Caco-2 (cell line): ENCODE measurements at regions of chr6 and their contacts with region 1.

Region 1: DNA sequence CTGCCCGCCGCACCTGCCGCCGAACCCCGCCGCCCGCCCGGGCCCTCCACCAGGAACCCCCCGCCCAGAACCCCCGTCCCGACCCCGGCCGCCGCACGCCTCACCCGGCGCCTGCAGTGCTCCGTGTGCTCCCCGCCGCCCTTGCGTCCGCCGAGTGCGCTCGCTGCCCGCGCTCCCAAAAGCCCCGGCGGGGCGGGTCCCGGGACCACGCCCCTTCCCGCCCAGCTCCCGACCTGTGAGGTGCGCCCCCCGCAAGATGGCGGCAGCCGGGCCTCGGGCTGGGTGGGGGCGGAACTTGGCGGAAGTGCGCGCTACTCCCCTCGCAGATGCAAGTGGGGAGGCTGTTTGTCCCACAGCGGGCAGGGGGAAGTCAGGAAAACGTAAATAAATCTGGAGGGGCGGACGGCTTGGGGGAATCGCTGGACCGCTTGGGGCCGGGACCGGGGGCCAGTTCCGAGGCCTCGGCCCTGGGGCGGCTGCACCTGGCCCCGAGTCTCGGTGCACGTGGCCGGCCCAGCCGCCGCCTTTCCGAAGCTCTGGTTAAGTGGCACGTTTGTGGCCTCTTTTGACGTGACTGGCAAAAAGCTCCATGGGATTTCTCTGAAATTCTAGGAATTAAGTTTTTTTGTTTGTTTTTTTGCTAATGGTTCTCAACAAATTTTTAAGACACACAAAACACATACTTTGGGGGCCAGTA is at the start of gene EZR:
- DNase-seq: peak; percentile 89 to 90
- H3K4me3 ChIP-seq: peak within 1 kb of the TSS; percentile 71
- H3K4me3 Mint-ChIP-seq: peak within 1 kb of the TSS; percentile 89
- H3K27ac Mint-ChIP-seq: peak within 1 kb of the TSS; percentile 95
- H3K4me1 ChIP-seq: peaks cover 29% of the 10 kb centered on the region
- H3K4me1 Mint-ChIP-seq: peaks cover 18% of the 10 kb centered on the region
- H3K27me3 ChIP-seq: no peaks in the 10 kb centered on the region
- H3K27me3 Mint-ChIP-seq: no peaks in the 10 kb centered on the region
- CTCF ChIP-seq: peak in 1 of 2 experiments; percentile 13
- total RNA-seq, gene EZR: 282 and 290 TPM in 2 replicates

Region 2: GRCh38 chr6:158704181-158704822 is 115.1 kb before region 1 on chr6:
- CTCF ChIA-PET with region 1: no interaction called
- POLR2A ChIA-PET with region 1: no interaction called
- intact Hi-C with region 1: loop called (anchors 1 kb)
- DNase-seq: peak; percentile 80 to 89
- H3K4me3 ChIP-seq: peak overlapping the region; percentile 47
- H3K4me3 Mint-ChIP-seq: peak overlapping the region; percentile 84
- H3K27ac Mint-ChIP-seq: peak overlapping the region; percentile 92
- H3K4me1 ChIP-seq: peaks cover 43% of the 10 kb centered on the region
- H3K4me1 Mint-ChIP-seq: peaks cover 21% of the 10 kb centered on the region
- H3K27me3 ChIP-seq: no peaks in the 10 kb centered on the region
- H3K27me3 Mint-ChIP-seq: no peaks in the 10 kb centered on the region
- CTCF ChIP-seq: peak; percentile 91 to 96

Region 3: DNA sequence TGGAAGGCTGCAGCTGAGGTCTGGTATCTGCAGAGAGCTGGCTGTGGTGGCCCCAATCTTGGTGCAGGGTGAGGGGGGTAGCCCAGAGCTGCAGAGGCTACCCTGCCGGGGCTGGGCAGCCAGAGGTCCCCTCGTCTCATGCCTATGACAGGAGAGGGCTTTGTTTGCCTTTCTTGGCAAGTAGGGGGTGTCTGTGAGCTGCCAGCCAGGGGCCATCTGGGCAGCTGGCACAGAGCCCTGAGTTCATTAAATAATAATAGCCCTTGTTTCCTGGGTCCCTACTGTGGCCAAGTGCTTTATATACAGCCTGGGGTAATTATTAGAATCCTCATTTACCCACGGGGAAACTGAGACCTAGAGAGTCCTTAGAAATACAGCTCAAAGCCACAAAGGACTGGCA is 66.7 kb before region 1 on chr6:
- CTCF ChIA-PET with region 1: no interaction called
- POLR2A ChIA-PET with region 1: no interaction called
- intact Hi-C with region 1: no loop called
- DNase-seq: no peak
- H3K4me3 ChIP-seq: no peak overlapping the region
- H3K4me3 Mint-ChIP-seq: no peak overlapping the region
- H3K27ac Mint-ChIP-seq: no peak overlapping the region
- H3K4me1 ChIP-seq: no peaks in the 10 kb centered on the region
- H3K4me1 Mint-ChIP-seq: peaks cover 3% of the 10 kb centered on the region
- H3K27me3 ChIP-seq: no peaks in the 10 kb centered on the region
- H3K27me3 Mint-ChIP-seq: no peaks in the 10 kb centered on the region
- CTCF ChIP-seq: no peak

Region 4: DNA sequence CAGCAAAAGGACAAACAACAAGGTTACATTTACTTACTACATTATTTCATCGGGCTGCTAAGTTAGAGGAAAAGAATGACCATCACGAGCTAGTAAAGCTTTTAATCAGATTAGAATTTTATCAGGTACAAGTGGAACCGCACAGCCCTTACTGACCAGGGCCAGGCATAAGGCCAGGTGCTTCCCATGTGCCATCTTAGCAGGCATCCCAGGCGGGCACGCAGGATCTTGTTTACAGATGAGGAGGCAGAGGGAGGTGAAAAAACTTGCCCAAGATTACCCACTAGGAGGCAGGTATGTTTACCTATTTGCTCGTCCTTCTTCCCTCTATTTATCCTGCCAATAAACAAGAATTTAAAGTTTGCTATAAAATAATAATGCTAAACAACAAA is 10.9 kb before region 1 on chr6:
- CTCF ChIA-PET with region 1: no interaction called
- POLR2A ChIA-PET with region 1: interaction called, 5 read pairs
- intact Hi-C with region 1: loop called (anchors 1 kb)
- DNase-seq: no peak
- H3K4me3 ChIP-seq: no peak overlapping the region
- H3K4me3 Mint-ChIP-seq: no peak overlapping the region
- H3K27ac Mint-ChIP-seq: no peak overlapping the region
- H3K4me1 ChIP-seq: peaks cover 84% of the 10 kb centered on the region
- H3K4me1 Mint-ChIP-seq: peaks cover 64% of the 10 kb centered on the region
- H3K27me3 ChIP-seq: no peaks in the 10 kb centered on the region
- H3K27me3 Mint-ChIP-seq: no peaks in the 10 kb centered on the region
- CTCF ChIP-seq: no peak

Region 5: GRCh38 chr6:158853072-158853871 is 33.9 kb after region 1 on chr6:
- CTCF ChIA-PET with region 1: interaction called, 3 read pairs
- POLR2A ChIA-PET with region 1: interaction called, 21 read pairs
- intact Hi-C with region 1: loop called (anchors 1 kb)
- DNase-seq: peak; percentile 95 to 98
- H3K4me3 ChIP-seq: peak overlapping the region; percentile 21
- H3K4me3 Mint-ChIP-seq: no peak overlapping the region
- H3K27ac Mint-ChIP-seq: no peak overlapping the region
- H3K4me1 ChIP-seq: peaks cover 64% of the 10 kb centered on the region
- H3K4me1 Mint-ChIP-seq: peaks cover 27% of the 10 kb centered on the region
- H3K27me3 ChIP-seq: no peaks in the 10 kb centered on the region
- H3K27me3 Mint-ChIP-seq: no peaks in the 10 kb centered on the region
- CTCF ChIP-seq: no peak

Region 6: DNA sequence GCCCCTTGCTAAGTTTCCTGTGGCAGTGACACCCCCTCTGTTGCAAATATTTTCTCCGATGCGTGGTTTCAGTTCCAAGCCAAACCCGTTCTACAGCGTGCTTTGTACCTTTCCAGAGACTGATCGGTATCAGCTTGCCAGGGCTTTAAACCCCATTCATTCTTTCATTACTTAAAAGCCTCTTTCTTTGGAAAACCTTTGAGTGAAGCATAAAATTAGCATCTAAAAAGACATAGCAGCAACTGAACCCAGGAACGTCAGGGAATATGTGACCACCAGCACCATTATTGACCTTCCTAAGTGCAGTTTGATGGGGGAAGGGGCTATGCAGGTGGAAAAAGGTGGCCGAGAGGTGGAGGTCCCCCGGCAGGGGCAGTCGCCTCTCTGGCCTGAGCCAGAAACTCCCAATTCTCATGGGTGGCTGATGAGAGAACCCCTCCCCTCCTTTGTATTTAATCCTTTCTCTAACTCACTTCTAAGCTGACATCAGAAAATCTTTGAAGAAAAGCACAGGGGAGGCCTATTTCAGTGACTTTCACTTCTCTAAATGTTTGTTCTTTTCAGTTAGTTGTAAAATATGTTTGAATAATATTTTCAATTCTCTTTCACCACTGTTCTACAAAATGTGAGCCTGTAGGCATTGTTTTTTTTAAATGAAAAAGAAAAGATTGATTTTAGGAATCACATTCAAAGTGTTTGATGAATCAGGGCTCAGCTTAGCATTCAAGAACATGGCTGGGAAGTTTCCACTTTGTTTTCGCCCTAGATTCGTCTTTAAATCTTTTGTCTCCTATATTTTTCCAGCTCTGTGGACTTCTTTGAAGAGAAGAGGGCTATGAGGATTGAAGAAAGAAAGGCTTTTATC is 91.4 kb after region 1 on chr6:
- CTCF ChIA-PET with region 1: no interaction called
- POLR2A ChIA-PET with region 1: interaction called, 8 read pairs
- intact Hi-C with region 1: loop called (anchors 1 kb)
- DNase-seq: peak; percentile 69 to 71
- H3K4me3 ChIP-seq: 0 out of 2 replicates have a peak overlapping the region, but pooled peaks have one; percentile 8
- H3K4me3 Mint-ChIP-seq: peak overlapping the region; percentile 66
- H3K27ac Mint-ChIP-seq: peak overlapping the region; percentile 89
- H3K4me1 ChIP-seq: peaks cover 23% of the 10 kb centered on the region
- H3K4me1 Mint-ChIP-seq: peaks cover 10% of the 10 kb centered on the region
- H3K27me3 ChIP-seq: no peaks in the 10 kb centered on the region
- H3K27me3 Mint-ChIP-seq: no peaks in the 10 kb centered on the region
- CTCF ChIP-seq: no peak